Mammary epithelial cell (primary cell): ENCODE measurements at regions of chr12 and their contacts with region 1.

Region 1: GRCh38 chr12:74646831-74647230 is 109.2 kb downstream of the ATXN7L3B start:
- DNase-seq: peak; percentile 30
- H3K4me3 ChIP-seq: no peak overlapping the region
- H3K27ac ChIP-seq: no peak overlapping the region
- H3K4me1 ChIP-seq: no peaks in the 10 kb centered on the region
- H3K27me3 ChIP-seq: peaks cover 2% of the 10 kb centered on the region
- CTCF ChIP-seq: peak; percentile 34 to 62

Region 2: GRCh38 chr12:74415633-74416032 is 231.2 kb before region 1 on chr12:
- CTCF ChIA-PET with region 1: interaction called, 4 read pairs
- dilution Hi-C with region 1: no loop called
- in situ Hi-C with region 1: loop called in 1 of 2 experiments (anchors 25 kb)
- intact Hi-C with region 1: loop called (anchors 5 kb)
- DNase-seq: peak; percentile 15
- H3K4me3 ChIP-seq: no peak overlapping the region
- H3K27ac ChIP-seq: no peak overlapping the region
- H3K4me1 ChIP-seq: no peaks in the 10 kb centered on the region
- H3K27me3 ChIP-seq: no peaks in the 10 kb centered on the region
- CTCF ChIP-seq: peak; percentile 45 to 64

Region 3: DNA sequence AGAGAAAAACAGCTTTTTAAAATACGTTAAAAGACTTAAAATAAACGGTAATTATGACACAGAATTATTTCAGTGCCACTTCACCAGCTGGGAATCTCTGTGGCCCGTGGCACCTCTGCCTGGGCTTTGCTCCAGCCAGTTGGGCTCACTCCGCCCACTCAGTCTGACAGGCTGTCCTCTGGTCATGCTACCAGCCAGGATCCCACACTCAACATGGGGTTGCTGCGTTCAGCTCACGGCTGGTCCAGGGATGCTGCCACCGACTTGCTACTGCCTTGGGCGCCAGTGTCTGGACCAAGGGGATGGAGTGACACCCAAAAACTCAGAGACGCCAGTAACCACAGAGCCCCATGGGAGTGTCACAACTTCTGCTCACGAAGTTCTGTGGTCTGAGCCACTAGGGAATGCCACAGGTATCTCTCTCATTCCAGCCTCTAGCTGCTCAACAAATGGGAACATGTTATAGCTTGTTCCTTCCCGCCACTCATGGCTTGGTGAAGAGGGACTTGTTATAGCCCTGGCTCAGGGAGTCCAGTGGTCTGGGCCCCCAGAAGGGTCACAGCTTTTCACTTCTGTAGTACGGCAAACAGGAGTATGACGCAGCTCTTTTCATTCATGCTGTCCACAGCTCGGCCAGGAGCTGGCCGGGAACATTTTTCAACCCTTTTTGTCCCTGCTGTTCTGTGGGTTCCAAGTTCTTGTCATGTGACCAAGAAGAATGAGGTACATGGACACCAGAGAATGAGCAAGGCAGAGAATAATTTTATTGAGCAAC is 132.5 kb before region 1 on chr12:
- CTCF ChIA-PET with region 1: no interaction called
- dilution Hi-C with region 1: no loop called
- in situ Hi-C with region 1: no loop called
- intact Hi-C with region 1: no loop called
- DNase-seq: peak; percentile 11
- H3K4me3 ChIP-seq: no peak overlapping the region
- H3K27ac ChIP-seq: no peak overlapping the region
- H3K4me1 ChIP-seq: no peaks in the 10 kb centered on the region
- H3K27me3 ChIP-seq: no peaks in the 10 kb centered on the region
- CTCF ChIP-seq: no peak

Region 4: DNA sequence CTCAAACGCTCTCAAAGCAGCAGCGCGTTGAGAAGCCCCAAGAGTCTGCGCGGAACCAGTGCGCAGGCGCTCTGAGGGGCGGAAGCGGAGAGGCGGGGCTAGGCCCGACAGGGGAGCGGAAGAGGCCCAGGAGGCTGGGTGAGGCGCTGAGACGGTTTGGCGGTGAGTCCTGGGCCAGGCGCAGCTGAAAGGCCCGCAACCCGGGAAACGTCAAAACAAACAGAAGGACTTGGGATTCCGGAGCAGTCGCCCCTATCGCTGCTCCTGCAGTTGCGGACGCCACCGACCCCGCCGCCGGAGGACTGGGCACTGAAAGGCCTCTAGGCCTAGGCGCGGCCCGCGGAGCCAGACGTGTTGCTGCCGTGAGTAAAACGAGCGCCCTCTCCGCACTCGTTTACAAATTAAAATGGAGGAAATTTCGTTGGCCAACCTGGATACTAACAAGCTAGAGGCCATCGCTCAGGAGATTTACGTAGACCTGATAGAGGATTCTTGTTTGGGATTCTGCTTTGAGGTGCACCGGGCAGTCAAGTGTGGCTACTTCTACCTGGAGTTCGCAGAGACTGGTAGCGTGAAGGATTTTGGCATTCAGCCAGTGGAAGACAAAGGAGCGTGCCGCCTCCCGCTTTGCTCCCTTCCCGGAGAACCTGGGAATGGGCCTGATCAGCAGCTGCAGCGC is 109.0 kb before region 1 on chr12 and contains the start of gene ATXN7L3B:
- CTCF ChIA-PET with region 1: no interaction called
- dilution Hi-C with region 1: no loop called
- in situ Hi-C with region 1: no loop called
- intact Hi-C with region 1: loop called (anchors 2 kb)
- DNase-seq: peak; percentile 94
- H3K4me3 ChIP-seq: peak within 1 kb of the TSS; percentile 67 to 78 (median 69)
- H3K27ac ChIP-seq: peak within 1 kb of the TSS; percentile 97
- H3K4me1 ChIP-seq: peaks cover 24% of the 10 kb centered on the region
- H3K27me3 ChIP-seq: no peaks in the 10 kb centered on the region
- CTCF ChIP-seq: peak in 1 of 2 donors; percentile 8
- total RNA-seq, gene ATXN7L3B: 22.0 to 22.2 TPM

Region 5: DNA sequence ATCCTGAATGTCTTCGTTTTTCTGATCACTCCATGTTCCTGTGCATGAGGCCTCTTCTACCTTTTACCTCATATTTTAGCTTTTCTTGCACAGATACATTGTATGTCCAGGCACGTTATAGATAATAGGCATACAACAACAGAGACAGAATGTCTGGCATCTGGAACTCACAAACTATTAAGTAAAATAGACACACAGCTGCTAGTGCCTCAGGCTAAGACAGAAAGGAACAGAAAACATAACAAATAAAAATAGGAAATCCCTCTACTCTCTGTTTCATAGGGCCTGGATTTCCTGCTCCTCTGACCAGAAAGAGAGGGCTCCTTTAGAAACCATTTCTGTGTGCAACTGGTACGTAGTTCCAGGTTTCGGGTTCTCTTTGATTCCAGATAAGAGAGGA is 60.6 kb before region 1 on chr12:
- CTCF ChIA-PET with region 1: no interaction called
- dilution Hi-C with region 1: no loop called
- in situ Hi-C with region 1: no loop called
- intact Hi-C with region 1: no loop called
- DNase-seq: no peak
- H3K4me3 ChIP-seq: no peak overlapping the region
- H3K27ac ChIP-seq: no peak overlapping the region
- H3K4me1 ChIP-seq: no peaks in the 10 kb centered on the region
- H3K27me3 ChIP-seq: no peaks in the 10 kb centered on the region
- CTCF ChIP-seq: no peak

Region 6: GRCh38 chr12:74903522-74903921 is 256.7 kb after region 1 on chr12:
- CTCF ChIA-PET with region 1: no interaction called
- dilution Hi-C with region 1: no loop called
- in situ Hi-C with region 1: no loop called
- intact Hi-C with region 1: no loop called
- DNase-seq: peak; percentile 38
- H3K4me3 ChIP-seq: no peak overlapping the region
- H3K27ac ChIP-seq: no peak overlapping the region
- H3K4me1 ChIP-seq: no peaks in the 10 kb centered on the region
- H3K27me3 ChIP-seq: no peaks in the 10 kb centered on the region
- CTCF ChIP-seq: peak; percentile 42